ENCODE measurements at regions of chr12 and their contacts with region 1.

Region 1: GRCh38 chr12:47742253-47742825 is 16.3 kb downstream of the RAPGEF3 start:
- DNase-seq: peak; percentile 84
- ATAC-seq: peak; percentile 67
- H3K4me3 Mint-ChIP-seq: no peak overlapping the region
- H3K27ac Mint-ChIP-seq: no peak overlapping the region
- H3K4me1 Mint-ChIP-seq: peaks cover 26% of the 10 kb centered on the region
- H3K27me3 Mint-ChIP-seq: no peaks in the 10 kb centered on the region
- CTCF ChIP-seq: peak; percentile 100

Region 2: DNA sequence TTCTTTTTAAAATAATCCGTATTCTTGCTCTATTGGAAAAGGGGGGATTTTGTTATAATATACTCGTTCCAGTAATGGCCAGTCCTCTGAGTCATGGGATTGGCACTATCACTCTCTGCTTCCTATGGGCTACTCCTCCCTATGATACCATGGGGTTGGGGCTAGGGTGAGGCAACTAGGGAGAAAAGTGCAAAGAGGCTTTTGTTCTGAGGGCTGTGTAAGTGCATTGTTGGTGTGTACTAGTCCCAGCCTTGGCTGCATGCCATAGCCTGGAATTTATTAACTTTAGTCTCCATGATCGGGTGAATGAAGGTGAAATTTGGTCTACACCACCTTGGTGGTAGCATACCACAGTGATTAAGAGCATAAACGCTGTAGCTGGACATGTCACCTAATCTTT is 284.1 kb before region 1 on chr12:
- CTCF ChIA-PET with region 1: no interaction called
- POLR2A ChIA-PET with region 1: no interaction called
- intact Hi-C with region 1: no loop called
- DNase-seq: no peak
- ATAC-seq: no peak
- H3K4me3 Mint-ChIP-seq: no peak overlapping the region
- H3K27ac Mint-ChIP-seq: no peak overlapping the region
- H3K4me1 Mint-ChIP-seq: peaks cover 3% of the 10 kb centered on the region
- H3K27me3 Mint-ChIP-seq: no peaks in the 10 kb centered on the region
- CTCF ChIP-seq: no peak

Region 3: GRCh38 chr12:47551426-47551851 is 190.9 kb before region 1 on chr12:
- CTCF ChIA-PET with region 1: no interaction called
- POLR2A ChIA-PET with region 1: no interaction called
- intact Hi-C with region 1: no loop called
- DNase-seq: no peak
- ATAC-seq: no peak
- H3K4me3 Mint-ChIP-seq: no peak overlapping the region
- H3K27ac Mint-ChIP-seq: no peak overlapping the region
- H3K4me1 Mint-ChIP-seq: peaks cover 26% of the 10 kb centered on the region
- H3K27me3 Mint-ChIP-seq: no peaks in the 10 kb centered on the region
- CTCF ChIP-seq: no peak

Region 4: DNA sequence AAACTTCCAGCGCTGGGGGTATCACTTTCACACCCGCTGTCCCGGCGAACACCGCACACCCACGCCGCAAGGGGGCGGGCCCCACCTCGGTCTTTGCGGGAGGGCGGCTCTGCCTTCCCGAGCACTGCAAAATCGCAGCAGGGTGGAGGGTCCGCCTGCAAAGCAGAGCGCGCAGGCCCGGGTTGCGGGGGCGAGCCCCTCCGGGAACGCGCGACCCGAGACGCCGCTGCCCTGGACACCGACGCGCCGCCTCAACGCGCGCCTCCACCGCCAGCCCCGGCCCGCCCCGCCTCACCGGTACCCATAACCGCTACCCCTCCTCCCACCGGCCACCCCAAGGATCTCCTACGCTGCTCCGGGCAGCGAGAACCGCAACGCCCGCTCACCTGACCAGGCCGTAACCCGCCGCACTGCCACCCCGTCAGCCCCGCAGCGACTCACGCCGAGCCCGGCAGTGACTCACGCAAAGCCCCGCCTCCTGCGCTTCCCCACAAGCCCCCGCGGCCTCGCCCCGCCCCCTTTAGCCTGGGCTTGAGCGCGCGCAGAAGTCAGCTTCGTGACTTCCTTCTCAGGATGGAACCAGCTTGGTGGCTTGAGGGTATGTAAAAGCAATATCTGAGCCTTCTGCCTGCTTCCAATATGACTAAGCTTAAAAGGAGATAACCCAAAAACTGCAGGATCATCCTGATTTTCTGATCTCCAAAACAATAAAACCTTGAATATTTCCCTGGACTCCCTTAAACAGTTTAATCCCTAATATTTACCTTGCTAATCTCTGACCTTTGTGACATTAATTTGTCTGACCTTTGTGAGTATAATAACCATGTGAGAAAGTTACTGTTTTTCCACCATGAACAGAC is 36.5 kb before region 1 on chr12 and contains the start of gene RPAP3:
- CTCF ChIA-PET with region 1: interaction called, 28 read pairs
- POLR2A ChIA-PET with region 1: no interaction called
- intact Hi-C with region 1: no loop called
- DNase-seq: peak; percentile 99
- ATAC-seq: peak; percentile 97
- H3K4me3 Mint-ChIP-seq: peak within 1 kb of the TSS; percentile 87
- H3K27ac Mint-ChIP-seq: peak within 1 kb of the TSS; percentile 97
- H3K4me1 Mint-ChIP-seq: peaks cover 47% of the 10 kb centered on the region
- H3K27me3 Mint-ChIP-seq: no peaks in the 10 kb centered on the region
- CTCF ChIP-seq: peak; percentile 67
- total RNA-seq, gene RPAP3: 42.0 to 42.5 TPM

Region 5: DNA sequence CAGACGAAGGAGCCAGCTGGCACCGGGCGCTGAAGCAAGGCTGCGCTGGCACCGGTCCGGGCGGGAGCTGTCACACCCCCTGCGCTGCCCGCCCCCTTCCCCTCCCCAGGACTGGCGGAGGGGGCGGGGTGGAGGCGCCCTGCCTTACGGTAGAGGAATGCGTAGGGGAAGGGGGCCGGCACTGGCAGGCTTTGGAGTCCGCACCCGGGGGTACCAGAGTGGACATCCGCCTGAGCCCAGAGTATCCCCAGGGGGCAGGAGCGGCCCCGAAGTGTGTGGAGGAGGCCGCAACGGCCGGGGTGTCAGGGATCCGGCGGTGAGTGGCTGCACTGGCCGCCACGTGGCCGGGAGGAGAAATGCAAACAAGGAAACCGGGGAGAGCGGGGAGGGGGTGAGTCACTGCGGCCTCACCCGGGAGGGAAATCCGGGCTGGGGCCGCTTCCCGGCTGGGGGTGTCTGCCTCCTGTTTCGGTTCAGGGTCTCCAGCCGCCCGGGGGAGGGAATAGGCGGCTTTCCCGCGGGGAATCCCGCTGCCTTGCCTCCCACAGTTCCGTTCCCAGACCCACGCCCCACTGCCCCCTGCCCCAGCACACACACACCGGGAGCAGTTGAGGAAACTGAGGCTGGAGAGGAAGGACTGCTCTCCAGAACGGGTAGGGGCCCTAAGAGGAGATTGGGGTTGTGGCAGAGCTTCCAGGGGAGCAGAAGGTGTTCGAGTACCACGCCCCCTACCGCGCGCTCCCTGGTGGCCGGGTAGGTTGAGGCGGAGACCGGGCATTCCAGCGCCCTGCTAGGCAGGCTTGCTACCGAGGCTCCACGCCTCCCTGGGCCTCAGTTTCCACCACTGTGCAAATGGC is 16.7 kb after region 1 on chr12 and contains the start of gene RAPGEF3:
- CTCF ChIA-PET with region 1: interaction called, 355 read pairs
- POLR2A ChIA-PET with region 1: interaction called, 6 read pairs
- intact Hi-C with region 1: no loop called
- DNase-seq: peak; percentile 71
- ATAC-seq: peak; percentile 65
- H3K4me3 Mint-ChIP-seq: peak within 1 kb of the TSS; percentile 65
- H3K27ac Mint-ChIP-seq: no peak within 1 kb of the TSS
- H3K4me1 Mint-ChIP-seq: peaks cover 30% of the 10 kb centered on the region
- H3K27me3 Mint-ChIP-seq: no peaks in the 10 kb centered on the region
- CTCF ChIP-seq: peak; percentile 68
- total RNA-seq, gene RAPGEF3: 0.56 to 0.58 TPM

Region 6: DNA sequence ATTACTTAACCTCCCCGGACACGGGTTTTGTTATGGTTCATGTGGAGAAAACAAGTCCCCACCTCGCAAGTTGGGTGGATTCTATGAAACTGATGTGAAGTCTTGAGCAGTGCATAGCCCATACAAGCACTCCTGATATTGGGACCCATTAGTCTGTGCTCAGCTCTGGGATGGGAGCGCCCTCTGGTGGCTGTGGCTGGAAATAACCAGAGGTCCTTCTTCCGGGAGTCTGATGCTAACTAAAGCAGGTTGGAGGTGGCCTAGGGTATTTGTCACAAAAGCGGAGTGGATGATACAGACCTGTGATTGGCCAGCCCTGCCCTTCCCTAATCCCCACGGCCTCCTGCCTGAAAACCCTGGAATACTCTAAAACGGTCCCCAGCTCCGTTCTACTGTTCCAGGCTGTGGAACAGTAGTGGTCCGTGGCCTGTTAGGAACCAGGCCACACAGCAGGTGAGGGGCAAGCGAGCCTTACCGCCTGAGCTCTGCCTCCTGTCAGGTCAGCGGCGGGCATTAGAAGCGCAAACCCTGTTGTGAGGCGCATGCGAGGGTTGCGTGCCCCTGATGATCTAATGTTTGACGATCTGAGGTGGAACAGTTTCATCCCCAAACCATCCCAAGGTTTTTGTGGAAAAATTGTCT is 37.1 kb after region 1 on chr12:
- CTCF ChIA-PET with region 1: interaction called, 685 read pairs
- POLR2A ChIA-PET with region 1: interaction called, 11 read pairs
- intact Hi-C with region 1: no loop called
- DNase-seq: peak; percentile 96
- ATAC-seq: peak; percentile 80
- H3K4me3 Mint-ChIP-seq: peak overlapping the region; percentile 7
- H3K27ac Mint-ChIP-seq: peak overlapping the region; percentile 18
- H3K4me1 Mint-ChIP-seq: peaks cover 31% of the 10 kb centered on the region
- H3K27me3 Mint-ChIP-seq: no peaks in the 10 kb centered on the region
- CTCF ChIP-seq: peak; percentile 89

Region 7: GRCh38 chr12:47819896-47820630 is 77.7 kb after region 1 on chr12 and contains the start of gene HDAC7:
- CTCF ChIA-PET with region 1: interaction called, 12 read pairs
- POLR2A ChIA-PET with region 1: interaction called, 3 read pairs
- intact Hi-C with region 1: no loop called
- DNase-seq: peak; percentile 87
- ATAC-seq: peak; percentile 52
- H3K4me3 Mint-ChIP-seq: peak within 1 kb of the TSS; percentile 90
- H3K27ac Mint-ChIP-seq: peak within 1 kb of the TSS; percentile 99
- H3K4me1 Mint-ChIP-seq: peaks cover 52% of the 10 kb centered on the region
- H3K27me3 Mint-ChIP-seq: no peaks in the 10 kb centered on the region
- CTCF ChIP-seq: no peak
- total RNA-seq, gene HDAC7: 373 to 382 TPM

Region 8: DNA sequence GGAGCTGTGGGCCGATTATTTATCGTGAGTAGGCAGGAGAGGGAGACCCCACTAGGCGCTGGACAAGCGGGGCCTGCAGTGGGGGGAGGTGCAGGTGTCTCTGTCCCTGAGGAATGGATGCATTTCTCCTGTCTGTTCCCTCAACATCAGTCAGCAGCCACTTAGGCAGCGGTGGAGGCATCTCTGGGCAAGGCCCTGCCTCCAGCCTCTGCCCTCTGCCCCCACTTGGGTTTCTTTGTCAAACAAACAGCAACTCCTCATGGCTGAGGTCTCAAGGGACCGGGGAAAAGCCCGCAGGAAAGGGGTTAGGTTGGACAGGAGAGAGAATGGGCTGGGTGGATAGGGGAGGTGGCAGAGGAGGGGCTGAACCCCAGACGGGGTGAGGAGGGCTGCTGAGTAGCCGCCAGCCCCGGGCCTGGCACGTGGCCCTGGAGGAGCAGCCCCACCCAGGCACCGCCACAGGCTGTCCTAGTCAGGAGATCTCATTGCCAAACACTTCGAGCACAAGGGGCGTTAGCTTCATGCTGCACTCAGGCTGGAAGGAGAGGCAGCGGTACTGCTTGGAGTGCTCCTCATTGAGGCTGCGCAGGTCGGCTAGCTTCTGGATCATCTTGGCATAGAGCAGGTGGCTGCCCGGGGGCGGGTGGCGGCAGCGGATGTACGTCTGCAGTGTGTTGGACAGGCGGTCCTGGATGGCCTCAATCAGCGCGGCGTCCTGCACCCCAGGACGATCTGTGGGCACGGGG is 102.1 kb after region 1 on chr12:
- CTCF ChIA-PET with region 1: interaction called, 286 read pairs
- POLR2A ChIA-PET with region 1: interaction called, 7 read pairs
- intact Hi-C with region 1: loop called (anchors 5 kb)
- DNase-seq: no peak
- ATAC-seq: no peak
- H3K4me3 Mint-ChIP-seq: no peak overlapping the region
- H3K27ac Mint-ChIP-seq: no peak overlapping the region
- H3K4me1 Mint-ChIP-seq: peaks cover 6% of the 10 kb centered on the region
- H3K27me3 Mint-ChIP-seq: peaks cover 2% of the 10 kb centered on the region
- CTCF ChIP-seq: no peak

Region 9: DNA sequence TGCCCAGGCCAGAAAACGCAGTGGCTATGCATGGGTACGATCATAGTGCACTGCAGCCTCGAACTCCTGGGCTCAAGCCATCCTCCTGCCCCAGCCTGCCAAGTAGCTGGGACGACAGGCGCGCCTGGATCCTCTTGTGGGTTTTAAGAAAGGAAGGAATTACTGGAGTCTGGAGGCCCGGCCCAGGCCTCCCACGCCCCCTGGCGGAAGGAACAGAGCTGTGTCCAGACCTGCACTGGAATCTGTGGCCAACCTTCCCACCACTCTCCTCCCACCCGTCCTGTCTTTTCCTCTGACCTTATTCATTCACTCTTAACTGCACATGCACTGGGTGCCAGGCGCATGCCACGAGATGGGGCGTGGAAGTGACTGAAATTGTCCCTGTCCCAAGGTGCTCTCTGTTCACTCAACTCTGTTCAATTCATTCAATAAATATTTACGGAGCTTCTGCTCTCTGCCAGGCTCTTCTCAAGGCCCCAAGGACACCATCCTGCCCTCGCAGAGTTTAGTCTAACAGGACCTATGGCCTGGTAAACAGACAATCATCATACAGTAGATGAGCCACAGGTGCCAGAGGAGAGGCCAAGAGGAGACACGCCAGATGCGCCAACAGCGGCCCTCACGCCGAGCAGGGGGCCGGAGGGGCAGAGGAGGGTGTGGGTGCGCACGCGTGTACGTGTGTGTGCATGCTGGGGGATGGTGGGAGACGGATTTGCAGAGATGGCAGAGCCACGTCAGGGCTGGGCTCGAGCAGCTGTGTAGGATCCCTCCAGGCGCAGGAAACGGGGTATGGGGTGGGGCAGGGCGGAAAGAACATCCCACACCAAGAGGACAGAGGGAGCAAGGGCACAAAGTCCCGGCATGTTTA is 207.3 kb after region 1 on chr12:
- CTCF ChIA-PET with region 1: interaction called, 13 read pairs
- POLR2A ChIA-PET with region 1: no interaction called
- intact Hi-C with region 1: no loop called
- DNase-seq: peak; percentile 65
- ATAC-seq: peak; percentile 72
- H3K4me3 Mint-ChIP-seq: no peak overlapping the region
- H3K27ac Mint-ChIP-seq: no peak overlapping the region
- H3K4me1 Mint-ChIP-seq: no peaks in the 10 kb centered on the region
- H3K27me3 Mint-ChIP-seq: peaks cover 5% of the 10 kb centered on the region
- CTCF ChIP-seq: peak; percentile 88